ENCODE measurements at regions of chr15 and their contacts with region 1.

Region 1: DNA sequence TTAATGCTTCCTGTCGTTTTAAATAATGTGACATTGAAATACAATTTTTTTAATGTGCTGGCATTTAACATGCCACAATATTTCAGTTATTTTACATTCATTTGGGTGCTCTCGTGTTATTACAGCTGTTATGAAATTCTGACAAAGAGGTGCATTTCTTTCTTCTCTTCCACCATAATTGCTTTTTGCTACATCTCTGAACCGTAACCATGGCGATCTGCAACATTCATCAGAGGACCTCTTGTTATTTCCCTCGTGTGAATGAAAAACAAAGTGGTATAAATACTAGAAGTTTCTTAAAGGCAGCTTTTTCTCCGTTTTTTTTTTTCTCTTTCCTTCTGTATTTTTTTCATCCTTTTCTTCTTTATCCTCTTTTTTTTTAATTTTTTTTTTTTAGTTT is 316.4 kb downstream of the MCTP2 start:
- DNase-seq: no peak
- ATAC-seq: no peak
- H3K4me3 ChIP-seq: no peak overlapping the region
- H3K4me3 Mint-ChIP-seq: no peak overlapping the region
- H3K27ac ChIP-seq: no peak overlapping the region
- H3K27ac Mint-ChIP-seq: no peak overlapping the region
- H3K4me1 ChIP-seq: no peaks in the 10 kb centered on the region
- H3K4me1 Mint-ChIP-seq: no peaks in the 10 kb centered on the region
- H3K27me3 ChIP-seq: peaks cover 0 to 3% (median 0%) of the 10 kb centered on the region in 4 experiments
- H3K27me3 Mint-ChIP-seq: peaks cover 14% of the 10 kb centered on the region
- CTCF ChIP-seq: no peak

Region 2: GRCh38 chr15:94478763-94479162 is 68.9 kb before region 1 on chr15:
- CTCF ChIA-PET with region 1: no interaction called
- POLR2A ChIA-PET with region 1: no interaction called
- intact Hi-C with region 1: no loop called
- DNase-seq: peak; percentile 16
- ATAC-seq: peak; percentile 24
- H3K4me3 ChIP-seq: no peak overlapping the region
- H3K4me3 Mint-ChIP-seq: no peak overlapping the region
- H3K27ac ChIP-seq: no peak overlapping the region
- H3K27ac Mint-ChIP-seq: no peak overlapping the region
- H3K4me1 ChIP-seq: no peaks in the 10 kb centered on the region
- H3K4me1 Mint-ChIP-seq: peaks cover 5% of the 10 kb centered on the region
- H3K27me3 ChIP-seq: no peaks in the 10 kb centered on the region
- H3K27me3 Mint-ChIP-seq: no peaks in the 10 kb centered on the region
- CTCF ChIP-seq: no peak

Region 3: DNA sequence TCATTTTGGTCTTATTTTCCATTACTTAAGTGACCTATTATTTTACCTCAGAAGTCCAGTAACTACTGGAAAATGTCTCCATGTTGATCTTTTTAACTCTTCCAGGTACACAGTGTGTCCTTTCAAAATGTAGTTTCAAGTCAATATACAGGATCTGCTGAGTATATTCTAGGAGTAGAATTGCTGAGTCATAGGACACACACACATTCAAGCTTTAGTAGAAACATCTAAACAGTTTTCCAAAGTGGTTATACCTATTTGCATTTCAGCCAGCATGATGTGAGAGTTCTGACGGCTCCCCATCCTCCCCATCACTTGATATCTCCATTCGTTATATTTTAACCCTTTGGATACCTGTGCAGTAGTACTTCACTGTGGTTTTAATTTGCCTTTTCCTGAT is 44.4 kb before region 1 on chr15:
- CTCF ChIA-PET with region 1: no interaction called
- POLR2A ChIA-PET with region 1: no interaction called
- intact Hi-C with region 1: loop called (anchors 5 kb)
- DNase-seq: no peak
- ATAC-seq: no peak
- H3K4me3 ChIP-seq: no peak overlapping the region
- H3K4me3 Mint-ChIP-seq: no peak overlapping the region
- H3K27ac ChIP-seq: no peak overlapping the region
- H3K27ac Mint-ChIP-seq: no peak overlapping the region
- H3K4me1 ChIP-seq: no peaks in the 10 kb centered on the region
- H3K4me1 Mint-ChIP-seq: no peaks in the 10 kb centered on the region
- H3K27me3 ChIP-seq: peaks cover 0 to 8% (median 1%) of the 10 kb centered on the region in 4 experiments
- H3K27me3 Mint-ChIP-seq: peaks cover 21% of the 10 kb centered on the region
- CTCF ChIP-seq: no peak

Measured in B cell (primary cell).